ENCODE measurements at regions of chr17 and their contacts with region 1.

Region 1: DNA sequence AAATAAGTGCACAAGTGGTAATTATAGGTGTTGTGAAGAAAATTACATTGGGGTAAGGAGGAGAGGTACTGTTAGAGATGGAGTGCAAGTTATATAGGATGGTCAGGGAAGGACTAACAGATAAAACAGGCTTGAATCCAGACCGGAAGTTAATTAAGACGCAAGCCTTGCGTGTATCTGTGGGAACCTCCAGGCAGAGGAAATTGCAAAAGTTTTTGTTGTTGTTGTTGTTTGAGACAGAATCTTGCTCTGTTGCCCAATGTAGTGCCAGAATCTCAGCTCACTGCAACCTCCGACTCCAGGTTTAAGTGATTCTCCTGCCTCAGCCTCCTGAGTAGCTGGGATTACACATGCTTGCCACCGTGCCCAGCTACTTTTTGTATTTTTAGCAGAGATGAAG is 2.4 kb upstream of the ZNF18 start:
- DNase-seq: no peak
- H3K4me3 ChIP-seq: no peak overlapping the region
- H3K27ac ChIP-seq: no peak overlapping the region
- H3K4me1 ChIP-seq: peaks cover 6% of the 10 kb centered on the region
- H3K27me3 ChIP-seq: no peaks in the 10 kb centered on the region

Region 2: GRCh38 chr17:12068946-12069345 is 69.2 kb after region 1 on chr17:
- in situ Hi-C with region 1: loop called (anchors 10 kb)
- DNase-seq: peak; percentile 12
- H3K4me3 ChIP-seq: no peak overlapping the region
- H3K27ac ChIP-seq: no peak overlapping the region
- H3K4me1 ChIP-seq: peaks cover 13% of the 10 kb centered on the region
- H3K27me3 ChIP-seq: no peaks in the 10 kb centered on the region

Region 3: DNA sequence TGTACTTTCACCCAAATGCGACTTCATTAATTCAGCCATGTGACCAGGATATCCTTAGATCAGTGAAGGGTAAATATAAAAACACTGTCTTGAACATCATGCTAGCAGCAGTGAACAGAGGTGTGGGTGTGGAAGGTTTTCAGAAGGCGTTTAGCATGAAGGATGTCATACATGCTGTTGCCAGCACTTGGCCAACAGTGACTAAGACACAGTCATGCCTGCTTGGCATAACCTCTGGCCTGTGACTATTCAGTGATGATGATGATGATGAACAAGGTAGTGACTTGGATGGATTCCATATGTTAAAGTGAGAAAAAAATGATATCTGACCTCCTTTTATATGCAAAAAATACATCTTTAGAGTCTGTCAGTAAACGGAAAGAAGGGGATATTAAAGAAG is 118.9 kb after region 1 on chr17:
- in situ Hi-C with region 1: no loop called
- DNase-seq: peak; percentile 43
- H3K4me3 ChIP-seq: no peak overlapping the region
- H3K27ac ChIP-seq: no peak overlapping the region
- H3K4me1 ChIP-seq: peaks cover 20% of the 10 kb centered on the region
- H3K27me3 ChIP-seq: no peaks in the 10 kb centered on the region